ENCODE measurements at regions of chr1 and their contacts with region 1.

Region 1: GRCh38 chr1:1206376-1207260 is at the start of gene TNFRSF18:
- DNase-seq: peak; percentile 84
- H3K4me3 Mint-ChIP-seq: peak within 1 kb of the TSS; percentile 91
- H3K27ac Mint-ChIP-seq: peak within 1 kb of the TSS; percentile 98
- H3K4me1 Mint-ChIP-seq: peaks cover 30% of the 10 kb centered on the region
- H3K27me3 Mint-ChIP-seq: no peaks in the 10 kb centered on the region
- total RNA-seq, gene TNFRSF18: 250 and 254 TPM in 2 replicates

Region 2: GRCh38 chr1:958823-959729 is 247.5 kb before region 1 on chr1 and contains the start of gene NOC2L:
- intact Hi-C with region 1: no loop called
- DNase-seq: peak; percentile 97
- H3K4me3 Mint-ChIP-seq: peak within 1 kb of the TSS; percentile 99
- H3K27ac Mint-ChIP-seq: peak within 1 kb of the TSS; percentile 83
- H3K4me1 Mint-ChIP-seq: peaks cover 19% of the 10 kb centered on the region
- H3K27me3 Mint-ChIP-seq: no peaks in the 10 kb centered on the region
- total RNA-seq, gene NOC2L: 190 and 192 TPM in 2 replicates

Region 3: GRCh38 chr1:1122078-1122811 is 84.4 kb before region 1 on chr1:
- intact Hi-C with region 1: loop called (anchors 2 kb)
- DNase-seq: peak; percentile 96
- H3K4me3 Mint-ChIP-seq: no peak overlapping the region
- H3K27ac Mint-ChIP-seq: peak overlapping the region; percentile 25
- H3K4me1 Mint-ChIP-seq: no peaks in the 10 kb centered on the region
- H3K27me3 Mint-ChIP-seq: peaks cover 9% of the 10 kb centered on the region

Region 4: GRCh38 chr1:1137256-1138045 is 69.2 kb before region 1 on chr1:
- intact Hi-C with region 1: loop called (anchors 5 kb)
- DNase-seq: peak; percentile 94
- H3K4me3 Mint-ChIP-seq: peak overlapping the region; percentile 66
- H3K27ac Mint-ChIP-seq: peak overlapping the region; percentile 87
- H3K4me1 Mint-ChIP-seq: peaks cover 21% of the 10 kb centered on the region
- H3K27me3 Mint-ChIP-seq: no peaks in the 10 kb centered on the region

Region 5: DNA sequence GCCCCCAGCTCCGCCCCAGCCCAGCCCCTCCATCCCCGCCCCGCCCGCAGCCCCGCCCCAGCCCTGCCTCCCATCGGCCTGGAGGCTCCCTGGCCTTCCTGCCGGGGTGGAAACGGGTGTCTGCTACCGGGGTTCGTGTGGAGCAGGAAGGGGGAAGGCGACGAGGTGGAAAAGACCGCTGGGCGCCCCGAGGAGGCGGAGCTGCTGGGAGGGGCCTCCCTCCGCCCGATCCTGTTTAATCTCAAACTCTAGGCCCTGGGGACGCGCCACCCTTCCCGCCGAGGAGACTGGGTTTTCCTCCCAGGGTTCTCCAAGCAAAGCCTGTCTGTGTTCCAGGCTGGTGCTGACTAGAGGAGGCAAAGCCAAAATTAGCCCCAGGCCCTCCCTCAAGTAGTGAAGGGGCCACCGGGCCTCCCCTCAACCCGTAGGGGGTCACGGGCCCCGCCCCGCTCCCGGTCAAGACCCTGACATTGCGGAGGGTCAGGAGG is 49.1 kb before region 1 on chr1:
- intact Hi-C with region 1: loop called (anchors 5 kb)
- DNase-seq: peak; percentile 89
- H3K4me3 Mint-ChIP-seq: peak overlapping the region; percentile 71
- H3K27ac Mint-ChIP-seq: peak overlapping the region; percentile 58
- H3K4me1 Mint-ChIP-seq: no peaks in the 10 kb centered on the region
- H3K27me3 Mint-ChIP-seq: no peaks in the 10 kb centered on the region

Region 6: GRCh38 chr1:1173793-1174415 is 32.7 kb before region 1 on chr1 and contains the start of gene TTLL10:
- intact Hi-C with region 1: no loop called
- DNase-seq: peak; percentile 92
- H3K4me3 Mint-ChIP-seq: peak within 1 kb of the TSS; percentile 15
- H3K27ac Mint-ChIP-seq: no peak within 1 kb of the TSS
- H3K4me1 Mint-ChIP-seq: peaks cover 13% of the 10 kb centered on the region
- H3K27me3 Mint-ChIP-seq: peaks cover 19% of the 10 kb centered on the region
- total RNA-seq, gene TTLL10: not detected in 2 replicates

Region 7: GRCh38 chr1:1250786-1251284 is 44.2 kb after region 1 on chr1:
- intact Hi-C with region 1: loop called (anchors 5 kb)
- DNase-seq: peak; percentile 90
- H3K4me3 Mint-ChIP-seq: peak overlapping the region; percentile 61
- H3K27ac Mint-ChIP-seq: peak overlapping the region; percentile 96
- H3K4me1 Mint-ChIP-seq: peaks cover 5% of the 10 kb centered on the region
- H3K27me3 Mint-ChIP-seq: no peaks in the 10 kb centered on the region

Region 8: GRCh38 chr1:1307908-1308755 is 101.5 kb after region 1 on chr1 and contains the starts of genes ACAP3 and PUSL1:
- intact Hi-C with region 1: loop called (anchors 5 kb)
- DNase-seq: peak; percentile 96
- H3K4me3 Mint-ChIP-seq: peak within 1 kb of the TSS; percentile 88
- H3K27ac Mint-ChIP-seq: peak within 1 kb of the TSS; percentile 90
- H3K4me1 Mint-ChIP-seq: peaks cover 18% of the 10 kb centered on the region
- H3K27me3 Mint-ChIP-seq: no peaks in the 10 kb centered on the region
- total RNA-seq, gene ACAP3: 54.1 and 55.7 TPM in 2 replicates
- total RNA-seq, gene PUSL1: 33.4 and 35.2 TPM in 2 replicates

Measured in activated CD4-positive, alpha-beta T cell treated with anti-CD3 and anti-CD28 coated beads, Interleukin-2, amount 10 ng/mL, durations not matched to agents 24 days and 14 days (primary cell).